ENCODE measurements at regions of chr4 and their contacts with region 1.

Region 1: DNA sequence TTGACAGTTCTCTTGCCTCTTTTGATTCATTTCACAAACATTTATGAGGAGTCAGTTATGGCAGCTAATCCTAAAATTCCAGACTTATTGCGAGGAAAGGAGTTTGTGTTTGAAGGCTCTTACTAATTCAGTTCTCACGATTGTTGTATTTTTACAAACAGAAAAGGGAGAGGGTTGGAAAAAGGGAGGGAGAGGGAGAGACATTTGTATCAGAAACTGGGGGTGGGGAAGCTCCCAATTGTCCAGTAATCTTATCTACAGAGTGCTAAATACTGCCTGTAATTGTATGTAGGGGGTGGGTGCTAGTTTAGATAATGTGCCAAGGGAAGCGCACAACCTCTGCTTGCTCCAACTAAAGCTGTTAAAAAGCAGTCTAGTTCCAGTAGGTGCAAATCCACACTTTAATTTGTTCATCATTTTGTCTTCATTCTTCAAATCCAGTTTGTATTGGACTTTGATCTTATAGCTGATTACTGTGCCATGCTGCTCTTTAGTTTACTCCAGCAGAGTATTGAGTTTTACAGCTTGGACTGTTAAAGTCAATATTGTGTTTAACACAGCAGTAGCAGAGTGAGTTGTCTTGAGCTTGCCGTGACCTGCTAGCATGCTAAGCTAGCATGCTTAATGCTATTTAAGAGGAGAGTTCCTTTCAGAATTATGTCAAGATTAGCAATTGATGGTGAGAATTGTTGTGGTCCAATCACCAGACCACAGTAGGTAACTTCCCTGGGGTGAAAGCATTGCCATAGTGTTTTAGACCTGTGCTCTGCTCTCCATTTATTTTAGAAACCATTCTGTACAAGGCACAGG is 13.9 kb downstream of the FNIP2 start:
- DNase-seq: peak; percentile 47

Region 2: GRCh38 chr4:158652920-158653319 is 129.8 kb before region 1 on chr4:
- CTCF ChIA-PET with region 1: no interaction called
- POLR2A ChIA-PET with region 1: no interaction called
- DNase-seq: no peak

Region 3: GRCh38 chr4:158682066-158682465 is 100.7 kb before region 1 on chr4:
- CTCF ChIA-PET with region 1: no interaction called
- POLR2A ChIA-PET with region 1: no interaction called
- DNase-seq: no peak

Region 4: DNA sequence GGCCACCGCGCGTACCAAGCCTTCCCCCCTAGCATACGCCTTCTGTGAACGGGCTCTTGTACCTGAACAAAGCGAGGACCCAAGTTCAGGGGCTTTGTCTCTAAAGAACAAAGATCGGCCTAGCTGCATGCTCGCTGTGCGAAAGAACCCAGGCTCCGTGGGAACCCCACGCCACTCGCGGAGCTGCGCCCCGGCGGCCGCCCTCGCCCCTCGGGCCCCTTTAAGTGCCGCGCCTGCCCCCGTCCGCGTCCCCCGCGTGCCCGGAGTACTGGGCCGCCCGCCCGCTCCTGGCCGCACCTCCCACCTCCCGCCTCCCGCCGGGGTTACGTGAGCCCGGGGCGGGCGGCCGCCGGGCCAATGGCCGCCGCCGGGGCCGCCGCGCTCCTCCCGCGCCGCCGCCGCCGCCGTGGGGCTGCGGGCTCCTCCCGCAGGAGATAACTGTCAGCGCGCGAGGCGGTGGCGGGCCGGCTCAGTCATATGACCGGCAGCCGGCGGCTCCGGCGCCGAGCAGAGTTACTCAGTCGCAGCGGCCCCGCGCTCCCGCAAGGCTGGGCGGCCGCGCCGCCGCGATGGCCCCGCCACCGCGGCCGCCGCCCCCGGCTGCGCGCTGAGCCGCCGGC is 14.1 kb before region 1 on chr4 and contains the start of gene FNIP2:
- CTCF ChIA-PET with region 1: no interaction called
- POLR2A ChIA-PET with region 1: interaction called, 15 read pairs
- DNase-seq: peak; percentile 75